ENCODE measurements at regions of chr2 and their contacts with region 1.

Region 1: GRCh38 chr2:196926562-196927375 is at the start of gene PGAP1:
- DNase-seq: peak; percentile 85
- H3K4me3 Mint-ChIP-seq: peak within 1 kb of the TSS; percentile 93
- H3K27ac Mint-ChIP-seq: peak within 1 kb of the TSS; percentile 98
- H3K4me1 Mint-ChIP-seq: peaks cover 31% of the 10 kb centered on the region
- H3K27me3 Mint-ChIP-seq: no peaks in the 10 kb centered on the region
- total RNA-seq, gene PGAP1: 29.3 to 33.3 TPM

Region 2: GRCh38 chr2:196291873-196292800 is 634.6 kb before region 1 on chr2:
- CTCF ChIA-PET with region 1: no interaction called
- intact Hi-C with region 1: loop called (anchors 10 kb)
- DNase-seq: no peak
- H3K4me3 Mint-ChIP-seq: no peak overlapping the region
- H3K27ac Mint-ChIP-seq: no peak overlapping the region
- H3K4me1 Mint-ChIP-seq: peaks cover 46% of the 10 kb centered on the region
- H3K27me3 Mint-ChIP-seq: no peaks in the 10 kb centered on the region

Region 3: GRCh38 chr2:196798980-196799379 is 127.8 kb before region 1 on chr2:
- CTCF ChIA-PET with region 1: no interaction called
- intact Hi-C with region 1: loop called (anchors 1 kb)
- DNase-seq: no peak
- H3K4me3 Mint-ChIP-seq: peak overlapping the region; percentile 91
- H3K27ac Mint-ChIP-seq: peak overlapping the region; percentile 90
- H3K4me1 Mint-ChIP-seq: peaks cover 44% of the 10 kb centered on the region
- H3K27me3 Mint-ChIP-seq: peaks cover 3% of the 10 kb centered on the region

Region 4: GRCh38 chr2:196987649-196988364 is 61.0 kb after region 1 on chr2:
- CTCF ChIA-PET with region 1: interaction called, 5 read pairs
- intact Hi-C with region 1: loop called (anchors 1 kb)
- DNase-seq: peak; percentile 76
- H3K4me3 Mint-ChIP-seq: peak overlapping the region; percentile 17
- H3K27ac Mint-ChIP-seq: peak overlapping the region; percentile 98
- H3K4me1 Mint-ChIP-seq: peaks cover 78% of the 10 kb centered on the region
- H3K27me3 Mint-ChIP-seq: no peaks in the 10 kb centered on the region

Region 5: DNA sequence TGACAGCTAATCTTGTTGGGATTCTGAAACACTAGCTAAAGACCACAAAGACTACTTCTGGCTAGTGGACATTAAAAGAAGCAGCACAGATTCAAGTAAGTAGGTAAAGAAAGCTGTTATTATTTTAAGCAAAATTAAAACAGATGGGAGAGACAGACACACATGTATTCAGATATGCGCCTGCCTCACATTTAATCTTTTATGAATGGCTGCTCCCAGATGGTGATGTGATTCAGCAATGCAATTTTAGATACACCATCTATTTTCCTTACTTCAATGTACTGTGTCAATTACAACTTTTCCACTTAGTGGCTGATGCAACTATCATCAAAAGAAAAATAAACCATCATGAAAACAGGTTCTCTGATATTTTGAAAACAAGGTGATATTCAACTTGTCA is 132.7 kb after region 1 on chr2:
- CTCF ChIA-PET with region 1: no interaction called
- intact Hi-C with region 1: no loop called
- DNase-seq: no peak
- H3K4me3 Mint-ChIP-seq: no peak overlapping the region
- H3K27ac Mint-ChIP-seq: peak overlapping the region; percentile 14
- H3K4me1 Mint-ChIP-seq: peaks cover 33% of the 10 kb centered on the region
- H3K27me3 Mint-ChIP-seq: no peaks in the 10 kb centered on the region

Region 6: DNA sequence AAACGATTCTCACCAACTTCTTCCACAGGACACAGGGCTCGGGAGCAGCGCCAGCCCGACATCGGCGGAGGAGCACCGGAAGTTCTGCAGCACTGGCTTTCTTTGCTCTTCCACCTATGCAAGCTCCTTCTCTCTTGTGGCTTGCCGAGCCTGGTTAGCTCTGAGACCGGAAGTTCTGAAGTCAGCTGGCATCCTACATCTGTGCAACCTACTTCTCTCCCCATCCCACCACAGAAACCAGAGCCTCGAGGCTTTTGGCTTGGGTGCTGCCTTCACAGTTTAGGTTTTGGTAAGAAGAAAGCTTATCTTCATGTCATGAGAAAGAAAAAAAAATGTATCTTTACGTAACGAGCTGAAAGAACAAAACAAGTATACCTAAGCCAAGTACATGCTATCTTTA is 272.1 kb after region 1 on chr2:
- CTCF ChIA-PET with region 1: no interaction called
- intact Hi-C with region 1: loop called (anchors 2 kb)
- DNase-seq: peak; percentile 93
- H3K4me3 Mint-ChIP-seq: peak overlapping the region; percentile 83
- H3K27ac Mint-ChIP-seq: peak overlapping the region; percentile 96
- H3K4me1 Mint-ChIP-seq: peaks cover 86% of the 10 kb centered on the region
- H3K27me3 Mint-ChIP-seq: no peaks in the 10 kb centered on the region

Region 7: GRCh38 chr2:197322724-197323720 is 396.3 kb after region 1 on chr2:
- CTCF ChIA-PET with region 1: no interaction called
- intact Hi-C with region 1: loop called (anchors 5 kb)
- DNase-seq: peak; percentile 41
- H3K4me3 Mint-ChIP-seq: peak overlapping the region; percentile 62
- H3K27ac Mint-ChIP-seq: peak overlapping the region; percentile 88
- H3K4me1 Mint-ChIP-seq: peaks cover 73% of the 10 kb centered on the region
- H3K27me3 Mint-ChIP-seq: no peaks in the 10 kb centered on the region

Region 8: DNA sequence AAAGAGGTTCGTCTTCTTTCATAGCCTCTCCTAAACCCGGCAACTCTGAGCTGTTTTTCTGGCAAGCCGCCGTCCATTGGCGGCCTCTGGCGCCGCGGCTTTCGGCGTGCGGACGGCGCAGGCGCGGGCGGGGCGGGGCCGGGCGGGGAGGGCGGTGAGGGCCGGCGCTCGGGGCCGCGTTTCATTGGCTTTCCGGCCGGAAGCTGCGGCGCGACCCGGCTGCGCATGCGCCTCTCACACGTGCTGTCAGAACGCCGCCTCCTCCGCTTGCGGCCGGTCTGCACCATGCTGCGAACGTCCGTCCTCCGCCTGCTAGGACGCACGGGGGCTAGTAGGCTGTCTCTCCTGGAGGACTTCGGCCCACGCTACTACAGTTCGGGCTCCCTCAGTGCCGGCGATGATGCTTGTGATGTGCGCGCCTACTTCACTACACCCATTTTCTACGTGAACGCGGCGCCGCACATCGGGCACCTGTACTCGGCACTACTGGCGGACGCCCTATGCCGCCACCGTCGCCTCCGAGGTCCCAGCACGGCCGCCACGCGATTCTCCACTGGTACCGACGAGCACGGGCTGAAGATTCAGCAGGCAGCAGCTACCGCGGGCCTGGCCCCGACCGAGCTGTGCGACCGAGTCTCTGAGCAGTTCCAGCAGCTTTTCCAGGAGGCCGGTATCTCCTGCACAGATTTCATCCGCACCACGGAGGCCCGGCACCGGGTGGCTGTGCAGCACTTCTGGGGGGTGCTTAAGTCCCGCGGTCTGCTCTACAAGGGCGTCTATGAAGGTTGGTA is 778.5 kb after region 1 on chr2 and contains the start of gene MARS2:
- CTCF ChIA-PET with region 1: no interaction called
- intact Hi-C with region 1: loop called (anchors 10 kb)
- DNase-seq: peak; percentile 92
- H3K4me3 Mint-ChIP-seq: peak within 1 kb of the TSS; percentile 72
- H3K27ac Mint-ChIP-seq: peak within 1 kb of the TSS; percentile 80
- H3K4me1 Mint-ChIP-seq: peaks cover 37% of the 10 kb centered on the region
- H3K27me3 Mint-ChIP-seq: no peaks in the 10 kb centered on the region
- total RNA-seq, gene MARS2: 7.5 to 8.8 TPM